PC-3 (cell line): ENCODE measurements at regions of chrX and their contacts with region 1.

Region 1: DNA sequence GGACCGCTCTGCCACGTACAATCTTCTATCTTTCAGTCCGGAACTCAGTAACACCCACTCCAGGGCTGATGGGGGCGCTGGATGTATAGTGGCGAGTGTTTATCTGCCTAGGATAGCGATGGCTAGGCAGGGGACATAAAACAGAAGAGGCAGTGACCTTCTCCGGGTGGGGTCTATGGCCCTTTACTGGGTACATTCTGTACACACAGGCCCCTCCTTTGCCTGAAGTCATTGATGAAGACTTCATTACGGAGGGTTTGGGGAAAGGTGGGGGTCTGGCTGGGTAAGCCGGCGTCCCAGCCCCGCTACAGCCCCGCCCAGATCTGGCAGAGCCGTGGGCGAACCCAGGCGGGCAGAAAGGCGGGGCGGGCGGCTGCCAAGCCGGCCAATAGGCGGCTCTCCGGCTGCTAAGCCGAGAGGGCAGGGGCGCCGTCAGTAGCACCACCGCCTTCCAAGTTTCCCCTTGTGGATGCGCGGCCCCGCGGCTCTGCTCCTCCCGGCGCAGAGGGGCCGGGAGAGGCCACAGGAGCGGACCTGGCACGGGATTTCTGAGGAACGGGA is at the start of gene CHST7:
- DNase-seq: peak; percentile 76
- ATAC-seq: peak; percentile 72
- H3K4me3 ChIP-seq: peak within 1 kb of the TSS; percentile 94
- H3K27ac ChIP-seq: peak within 1 kb of the TSS; percentile 69
- H3K4me1 ChIP-seq: peaks cover 32% of the 10 kb centered on the region
- H3K27me3 ChIP-seq: no peaks in the 10 kb centered on the region
- CTCF ChIP-seq: peak; percentile 56
- total RNA-seq, gene CHST7: 24.7 and 31.9 TPM in 2 replicates

Region 2: GRCh38 chrX:46589977-46590723 is 16.7 kb after region 1 on chrX:
- CTCF ChIA-PET with region 1: interaction called, 7 read pairs
- POLR2A ChIA-PET with region 1: no interaction called
- intact Hi-C with region 1: loop called (anchors 2 kb)
- DNase-seq: peak; percentile 81
- ATAC-seq: peak; percentile 72
- H3K4me3 ChIP-seq: no peak overlapping the region
- H3K27ac ChIP-seq: no peak overlapping the region
- H3K4me1 ChIP-seq: peaks cover 30% of the 10 kb centered on the region
- H3K27me3 ChIP-seq: no peaks in the 10 kb centered on the region
- CTCF ChIP-seq: no peak

Region 3: GRCh38 chrX:46686003-46686645 is 112.7 kb after region 1 on chrX:
- CTCF ChIA-PET with region 1: no interaction called
- POLR2A ChIA-PET with region 1: no interaction called
- intact Hi-C with region 1: loop called (anchors 5 kb)
- DNase-seq: peak; percentile 53
- ATAC-seq: peak; percentile 65
- H3K4me3 ChIP-seq: no peak overlapping the region
- H3K27ac ChIP-seq: no peak overlapping the region
- H3K4me1 ChIP-seq: peaks cover 10% of the 10 kb centered on the region; the same call in 1 of the 2 replicates
- H3K27me3 ChIP-seq: no peaks in the 10 kb centered on the region
- CTCF ChIP-seq: peak; percentile 83